ENCODE measurements at regions of chr10 and their contacts with region 1.

Region 1: DNA sequence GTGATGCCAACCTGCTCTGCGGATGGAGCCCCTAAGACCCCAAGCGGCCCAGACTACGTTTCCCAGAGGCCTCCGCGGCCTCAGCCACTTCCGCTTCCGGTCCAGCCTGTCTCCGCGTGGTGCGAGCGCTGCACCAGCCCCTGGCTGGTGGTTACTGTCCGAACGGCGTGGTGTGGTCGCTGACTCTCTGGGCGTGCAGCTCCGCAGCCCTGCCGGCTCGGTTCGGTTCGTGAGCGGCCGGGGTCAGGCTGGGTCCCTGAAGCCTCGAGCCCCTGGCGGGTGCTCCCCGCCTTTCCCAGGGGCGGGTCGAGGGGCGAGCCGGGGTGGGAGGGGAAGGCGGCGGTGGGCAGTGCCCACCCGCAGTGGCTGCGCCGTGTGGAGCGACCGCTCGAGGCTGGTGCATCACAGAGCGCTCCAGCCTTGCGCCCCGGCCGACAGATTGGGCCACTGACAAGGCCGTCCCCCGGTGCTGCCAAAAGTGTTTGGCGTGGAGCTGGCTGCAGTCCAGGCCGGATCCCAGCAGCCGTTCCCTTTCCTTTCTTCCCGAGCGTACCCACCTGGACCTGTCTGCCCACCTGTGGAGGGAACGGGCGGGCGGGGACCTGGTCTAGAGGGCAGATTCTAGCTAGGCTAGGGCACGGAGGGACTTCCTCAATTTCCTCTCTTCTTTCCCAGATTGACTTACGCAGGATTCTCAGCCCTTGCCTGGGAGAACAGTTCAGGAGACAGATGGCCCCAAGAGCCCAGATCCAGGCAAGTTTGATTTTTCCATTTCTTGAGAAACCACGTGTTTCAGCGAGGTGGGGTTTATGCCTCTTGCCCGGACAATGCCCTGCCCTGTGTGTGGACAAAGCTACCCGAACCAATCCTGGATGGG is at the start of gene ZNF485:
- DNase-seq: peak; percentile 49 to 77
- ATAC-seq: peak; percentile 82 to 96 (median 95)
- H3K4me3 ChIP-seq: peak within 1 kb of the TSS; percentile 83
- H3K4me3 Mint-ChIP-seq: peak within 1 kb of the TSS; percentile 83
- H3K27ac ChIP-seq: peak within 1 kb of the TSS; percentile 52
- H3K27ac Mint-ChIP-seq: peak within 1 kb of the TSS; percentile 70 to 82
- H3K4me1 ChIP-seq: peaks cover 25% of the 10 kb centered on the region
- H3K4me1 Mint-ChIP-seq: peaks cover 22 to 23% of the 10 kb centered on the region in 2 donors
- H3K27me3 ChIP-seq: no peaks in the 10 kb centered on the region
- H3K27me3 Mint-ChIP-seq: no peaks in the 10 kb centered on the region
- CTCF ChIP-seq: no peak
- total RNA-seq, gene ZNF485: 1.1 to 2.8 (median 1.4) TPM

Region 2: GRCh38 chr10:43648398-43649184 is 42.0 kb after region 1 on chr10 and contains the start of gene ZNF32:
- intact Hi-C with region 1: loop called (anchors 1 kb)
- DNase-seq: peak; percentile 75 to 88
- ATAC-seq: peak; percentile 96 to 98 (median 96)
- H3K4me3 ChIP-seq: peak within 1 kb of the TSS; percentile 68
- H3K4me3 Mint-ChIP-seq: peak within 1 kb of the TSS; percentile 97
- H3K27ac ChIP-seq: peak within 1 kb of the TSS; percentile 68
- H3K27ac Mint-ChIP-seq: peak within 1 kb of the TSS; percentile 86 to 91
- H3K4me1 ChIP-seq: peaks cover 16% of the 10 kb centered on the region
- H3K4me1 Mint-ChIP-seq: peaks cover 28% of the 10 kb centered on the region in 2 donors
- H3K27me3 ChIP-seq: no peaks in the 10 kb centered on the region
- H3K27me3 Mint-ChIP-seq: peaks cover 2 to 4% of the 10 kb centered on the region in 2 donors
- CTCF ChIP-seq: no peak
- total RNA-seq, gene ZNF32: 19.1 to 28.9 (median 26.2) TPM

Measured in natural killer cell (primary cell).